Aorta (tissue), 5 donors: ENCODE measurements at regions of chr14 and their contacts with region 1.

Region 1: GRCh38 chr14:80954687-80955299 is 628 bp upstream of the TSHR start:
- DNase-seq: peak; percentile 84 to 91
- ATAC-seq: peak; percentile 94
- H3K4me3 ChIP-seq: peak overlapping the region; percentile 12 to 21
- H3K27ac ChIP-seq: no peak overlapping the region
- H3K4me1 ChIP-seq: no peaks in the 10 kb centered on the region
- H3K27me3 ChIP-seq: peaks cover 0 to 2% of the 10 kb centered on the region in 2 donors

Region 2: GRCh38 chr14:80919622-80920021 is 35.2 kb before region 1 on chr14:
- intact Hi-C with region 1: no loop called
- DNase-seq: no peak
- ATAC-seq: no peak
- H3K4me3 ChIP-seq: no peak overlapping the region
- H3K27ac ChIP-seq: no peak overlapping the region
- H3K4me1 ChIP-seq: no peaks in the 10 kb centered on the region
- H3K27me3 ChIP-seq: no peaks in the 10 kb centered on the region

Region 3: DNA sequence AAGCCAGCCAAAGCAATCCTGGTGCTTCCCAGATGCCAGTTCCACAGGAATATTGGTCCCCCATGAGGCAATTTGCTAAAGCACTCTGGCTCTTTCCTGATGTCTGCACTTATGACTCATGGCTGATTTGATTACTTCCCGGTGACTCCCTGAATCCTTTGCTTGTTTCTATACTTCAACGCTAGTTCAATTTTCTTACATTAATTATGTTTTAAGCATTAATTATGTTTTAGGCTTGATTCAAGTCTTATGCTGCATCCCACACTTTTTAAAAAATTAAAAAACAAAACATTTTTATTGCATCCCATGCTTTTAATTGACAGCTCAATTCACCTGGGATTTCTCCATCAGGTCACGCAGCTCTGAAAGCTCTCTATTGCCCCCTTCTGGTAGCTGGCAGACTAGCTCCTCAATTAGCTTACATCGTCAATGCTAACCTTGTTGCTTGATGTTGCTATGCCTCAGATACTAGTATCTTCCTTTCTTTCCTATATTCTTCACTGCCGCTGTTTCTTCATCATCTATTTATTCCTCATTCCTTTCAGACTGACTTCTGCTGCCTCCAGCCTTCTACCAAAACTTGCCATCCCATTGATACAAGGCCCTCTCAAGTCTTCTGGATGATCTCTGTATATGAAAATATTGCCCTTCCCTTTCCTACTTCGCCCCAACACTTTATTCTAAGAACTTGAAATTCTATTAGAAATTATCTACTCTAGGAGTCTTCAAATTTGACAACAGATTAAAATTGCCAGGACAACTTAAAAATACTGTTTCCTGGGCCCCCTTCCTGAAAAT is 32.6 kb after region 1 on chr14:
- intact Hi-C with region 1: loop called (anchors 1 to 2 kb)
- DNase-seq: peak; percentile 57 to 70
- ATAC-seq: peak; percentile 91
- H3K4me3 ChIP-seq: no peak overlapping the region
- H3K27ac ChIP-seq: no peak overlapping the region
- H3K4me1 ChIP-seq: no peaks in the 10 kb centered on the region
- H3K27me3 ChIP-seq: no peaks in the 10 kb centered on the region